ENCODE measurements at regions of chr22 and their contacts with region 1.

Region 1: DNA sequence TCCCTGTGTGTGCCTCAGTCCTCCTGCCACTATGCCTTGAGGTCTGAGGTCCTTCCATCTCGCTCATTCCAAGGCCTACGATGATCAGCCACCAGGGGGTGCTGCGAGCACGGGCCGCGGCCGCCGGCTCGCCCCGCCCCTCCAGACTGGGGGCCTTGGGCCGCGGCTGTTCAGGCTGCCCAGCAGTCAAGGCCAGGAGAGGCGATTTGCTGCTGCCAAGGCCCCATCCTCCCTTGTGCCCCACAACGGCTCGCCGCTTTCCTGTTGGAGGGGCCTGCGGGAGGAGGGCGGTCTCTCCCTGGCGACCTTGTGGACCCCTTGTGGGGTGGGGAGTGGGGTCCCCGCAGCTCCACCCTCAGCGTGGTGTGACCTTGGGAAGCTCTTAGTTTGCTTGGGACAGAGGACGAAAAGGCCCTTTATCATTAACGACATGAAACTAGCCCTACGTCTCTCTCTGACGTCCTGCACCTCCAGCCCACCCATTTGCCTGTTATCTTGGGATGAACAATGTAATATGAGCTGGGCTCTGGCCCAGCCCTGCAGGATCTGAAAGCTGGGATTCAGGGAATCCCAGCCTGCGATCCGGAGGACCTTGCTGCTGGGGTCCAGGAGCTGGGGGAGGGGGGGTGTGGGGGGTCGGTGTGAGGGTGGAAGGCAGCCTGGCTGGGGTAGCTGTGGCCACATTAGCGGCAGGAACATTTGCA is 5.3 kb upstream of the GALR3 start:
- DNase-seq: peak; percentile 59 to 96
- H3K4me3 ChIP-seq: no peak overlapping the region
- CTCF ChIP-seq: peak in 2 of 3 donors; percentile 66 to 86
- POLR2A ChIP-seq: no peak

Region 2: DNA sequence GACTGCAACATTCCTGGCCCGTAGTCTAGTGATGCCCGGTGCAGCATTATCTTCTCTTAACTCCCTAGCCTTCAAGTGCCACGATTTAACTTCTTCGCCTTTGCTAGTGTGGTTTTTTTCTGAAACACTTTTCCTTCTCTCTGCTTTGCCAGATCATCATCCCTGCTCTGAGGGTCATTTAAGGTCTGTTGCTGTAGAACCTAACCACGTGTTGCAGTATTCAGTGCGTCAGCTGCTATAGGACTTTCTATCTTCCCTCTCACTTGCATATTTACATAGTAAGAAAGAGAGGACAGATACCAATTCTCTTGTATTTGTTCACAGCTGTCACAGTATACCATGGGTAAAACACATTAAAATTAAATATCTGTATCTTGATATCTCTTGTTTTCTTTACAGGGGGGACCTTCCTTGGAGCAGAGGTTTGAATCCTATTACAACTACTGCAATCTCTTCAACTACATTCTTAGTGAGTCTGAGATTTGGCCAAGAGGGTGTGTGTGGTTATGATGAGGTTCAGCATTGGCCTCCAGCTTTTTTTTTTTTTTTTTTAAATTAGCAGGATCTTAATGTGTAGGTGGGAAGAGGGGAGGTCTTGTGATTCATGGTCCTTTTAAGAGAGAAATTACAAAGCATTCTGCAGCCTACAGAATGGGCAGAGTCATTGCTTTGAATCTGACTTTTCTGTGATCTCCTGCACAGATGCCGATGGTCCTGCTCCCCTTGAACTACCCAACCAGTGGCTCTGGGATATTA is 44.9 kb after region 1 on chr22:
- intact Hi-C with region 1: loop called (anchors 5 kb)
- DNase-seq: no peak
- H3K4me3 ChIP-seq: no peak overlapping the region
- CTCF ChIP-seq: no peak
- POLR2A ChIP-seq: no peak

Region 3: GRCh38 chr22:37933711-37934376 is 116.0 kb after region 1 on chr22:
- intact Hi-C with region 1: loop called (anchors 10 kb)
- DNase-seq: peak; percentile 83 to 97
- H3K4me3 ChIP-seq: no peak overlapping the region
- CTCF ChIP-seq: peak in 1 of 3 donors; percentile 92
- POLR2A ChIP-seq: no peak

Region 4: DNA sequence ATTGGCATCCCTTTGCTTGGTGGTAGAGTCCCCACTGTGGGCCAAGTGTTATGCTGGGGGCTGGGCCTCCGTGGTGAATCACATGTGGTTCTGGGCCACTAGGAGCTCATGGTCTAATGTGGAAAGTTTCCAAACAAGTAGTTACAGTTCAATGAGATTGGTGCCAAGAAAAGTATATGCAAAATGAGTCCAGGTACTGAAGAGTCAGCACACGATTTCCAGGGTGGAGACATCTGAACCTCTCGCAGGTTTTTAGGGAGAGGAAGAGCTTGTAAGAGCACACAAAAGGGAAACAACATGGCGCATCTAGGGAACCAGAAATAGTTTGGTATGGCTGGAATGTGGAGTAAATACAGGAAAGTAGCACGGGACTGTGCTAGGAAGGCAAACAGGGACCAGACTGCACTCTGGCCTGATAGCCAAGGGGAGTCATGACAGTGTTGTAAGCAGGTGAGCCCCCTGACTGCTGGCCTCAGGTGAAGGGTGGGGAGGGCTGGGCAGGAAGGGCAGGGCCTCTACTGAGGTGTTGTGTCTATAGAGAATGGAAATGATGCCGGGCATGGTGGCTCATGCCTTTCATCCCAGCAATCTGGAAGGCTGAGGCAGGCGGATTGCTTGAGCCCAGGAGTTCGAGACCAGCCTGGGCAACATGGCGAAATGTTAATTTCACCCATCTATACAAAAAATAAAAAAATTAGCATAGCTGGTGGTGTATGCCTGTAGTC is 148.2 kb after region 1 on chr22:
- intact Hi-C with region 1: loop called (anchors 5 kb)
- DNase-seq: no peak
- H3K4me3 ChIP-seq: no peak overlapping the region
- CTCF ChIP-seq: no peak
- POLR2A ChIP-seq: no peak

Measured in lower leg skin (tissue), 4 donors.